GM12878 (cell line): ENCODE measurements at regions of chr3 and their contacts with region 1.

Region 1: DNA sequence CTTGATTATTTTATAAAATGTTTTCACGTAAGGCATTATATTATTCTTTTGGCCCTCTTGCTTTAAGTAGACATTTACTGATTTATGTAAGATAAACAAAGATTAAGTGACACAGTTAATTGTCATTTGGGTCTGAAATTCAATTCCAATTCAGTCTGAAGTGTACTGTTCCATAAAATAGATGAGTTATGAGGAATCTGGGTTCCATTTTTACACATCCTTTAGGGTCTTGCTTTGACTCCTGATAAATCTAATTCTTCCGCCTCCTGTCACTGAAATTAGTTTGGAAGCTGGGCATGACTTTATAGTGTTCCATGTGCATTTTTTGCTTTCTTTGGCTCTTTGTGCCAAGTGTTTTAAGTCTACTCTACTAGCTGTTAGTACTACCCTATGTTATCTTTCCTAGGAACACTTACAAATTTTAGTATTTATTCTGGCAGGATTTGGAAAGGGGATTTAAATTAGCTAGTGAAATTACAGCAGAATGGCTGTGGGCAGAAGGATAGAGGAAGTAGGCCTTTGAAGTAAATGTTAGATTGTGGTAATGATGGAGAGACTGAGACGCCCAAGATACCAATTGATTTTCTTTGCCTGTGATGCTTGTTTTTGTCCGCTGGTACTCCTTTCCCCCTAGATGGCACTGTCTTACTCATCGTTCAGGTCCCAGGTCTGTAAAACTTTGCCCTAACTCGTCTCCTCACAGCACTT is 14.3 kb downstream of the ARL8B start:
- DNase-seq: no peak
- ATAC-seq: peak; percentile 74
- H3K4me3 ChIP-seq: no peak overlapping the region
- H3K27ac ChIP-seq: peak overlapping the region; percentile 90
- H3K4me1 ChIP-seq: peaks cover 48% of the 10 kb centered on the region
- H3K27me3 ChIP-seq: no peaks in the 10 kb centered on the region
- CTCF ChIP-seq: peak; percentile 72 to 85 (median 79)
- EP300 ChIP-seq: no peak; a peak in 2 of 4 replicates
- POLR2A ChIP-seq: no peak
- RAD21 ChIP-seq: peak; percentile 83

Region 2: DNA sequence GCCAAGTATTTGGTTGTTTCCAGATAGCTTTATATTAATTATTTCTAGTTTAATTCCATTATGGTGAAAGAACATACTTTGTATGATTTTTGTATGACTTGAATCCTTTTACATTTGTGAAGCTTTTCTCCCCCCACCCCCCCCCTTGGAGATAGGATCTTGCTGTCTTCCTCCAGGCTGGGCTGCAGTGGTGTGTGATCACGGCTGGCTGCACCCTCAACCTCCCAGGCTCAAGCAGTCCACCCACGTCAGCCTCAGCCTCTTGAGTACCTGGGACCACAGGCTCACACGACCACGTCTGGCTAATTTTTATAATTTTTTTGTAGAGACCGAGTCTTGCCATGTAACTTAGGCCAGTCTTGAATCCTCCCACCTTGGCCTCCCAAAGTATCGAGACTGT is 15.2 kb after region 1 on chr3:
- CTCF ChIA-PET with region 1: interaction called, 6 read pairs
- POLR2A ChIA-PET with region 1: interaction called, 6 read pairs
- RAD21 ChIA-PET with region 1: interaction called, 5 read pairs
- SMC1A ChIA-PET with region 1: interaction called, 17 read pairs
- in situ Hi-C with region 1: no loop called
- intact Hi-C with region 1: no loop called
- DNase-seq: no peak
- ATAC-seq: peak; percentile 55
- H3K4me3 ChIP-seq: no peak overlapping the region
- H3K27ac ChIP-seq: no peak overlapping the region; the same call in 1 of the 2 replicates
- H3K4me1 ChIP-seq: peaks cover 11% of the 10 kb centered on the region
- H3K27me3 ChIP-seq: no peaks in the 10 kb centered on the region
- CTCF ChIP-seq: no peak
- EP300 ChIP-seq: no peak
- POLR2A ChIP-seq: no peak
- RAD21 ChIP-seq: no peak

Region 3: DNA sequence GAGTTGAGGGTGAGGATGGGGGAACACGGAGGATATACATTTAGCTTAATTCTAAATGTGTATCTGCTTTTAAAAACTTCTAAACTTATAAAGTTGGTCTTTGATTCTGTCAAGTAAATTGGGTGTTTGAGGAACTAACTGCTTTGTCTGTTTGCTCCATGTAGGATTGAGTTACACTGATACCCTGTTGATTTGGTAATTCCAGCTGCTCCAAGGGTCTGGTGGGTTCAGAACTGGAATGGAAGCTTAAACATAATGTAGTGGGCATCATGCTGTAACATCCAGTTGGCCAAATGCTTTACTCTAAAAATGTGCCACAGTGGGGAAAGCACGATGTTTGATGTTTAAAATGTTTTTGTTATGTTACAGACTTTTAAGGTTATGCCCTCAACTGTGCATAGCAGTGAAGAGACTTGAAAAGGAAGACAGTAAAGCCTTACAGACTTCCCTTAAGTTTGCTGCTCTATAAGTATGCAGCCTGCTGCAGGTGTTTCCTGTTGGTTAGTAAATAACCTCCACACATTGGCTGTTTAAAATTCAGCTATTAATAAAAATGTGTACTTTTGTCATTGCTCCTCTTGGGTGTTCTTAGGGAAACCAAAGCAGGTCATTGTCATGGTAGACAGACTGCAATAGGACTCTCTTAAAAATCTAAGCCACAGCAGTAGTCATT is 45.2 kb after region 1 on chr3:
- CTCF ChIA-PET with region 1: interaction called, 163 read pairs
- POLR2A ChIA-PET with region 1: interaction called, 6 read pairs
- RAD21 ChIA-PET with region 1: interaction called, 28 read pairs
- SMC1A ChIA-PET with region 1: interaction called, 284 read pairs
- in situ Hi-C with region 1: no loop called
- intact Hi-C with region 1: loop called (anchors 2 kb)
- DNase-seq: no peak
- ATAC-seq: peak; percentile 23
- H3K4me3 ChIP-seq: peak overlapping the region; percentile 34; the same call in 1 of the 2 replicates
- H3K27ac ChIP-seq: peak overlapping the region; percentile 78
- H3K4me1 ChIP-seq: peaks cover 42% of the 10 kb centered on the region
- H3K27me3 ChIP-seq: no peaks in the 10 kb centered on the region
- CTCF ChIP-seq: no peak
- EP300 ChIP-seq: no peak
- POLR2A ChIP-seq: no peak
- RAD21 ChIP-seq: 0 out of 2 replicates have a peak, but pooled peaks have one; percentile 6

Region 4: GRCh38 chr3:5194341-5195159 is 58.2 kb after region 1 on chr3:
- CTCF ChIA-PET with region 1: interaction called, 163 read pairs
- POLR2A ChIA-PET with region 1: interaction called, 67 read pairs
- RAD21 ChIA-PET with region 1: interaction called, 93 read pairs
- SMC1A ChIA-PET with region 1: interaction called, 284 read pairs
- in situ Hi-C with region 1: no loop called
- intact Hi-C with region 1: loop called (anchors 2 kb)
- DNase-seq: no peak
- ATAC-seq: peak; percentile 49
- H3K4me3 ChIP-seq: peak overlapping the region; percentile 39; the same call in 1 of the 2 replicates
- H3K27ac ChIP-seq: peak overlapping the region; percentile 94
- H3K4me1 ChIP-seq: peaks cover 57% of the 10 kb centered on the region
- H3K27me3 ChIP-seq: no peaks in the 10 kb centered on the region
- CTCF ChIP-seq: no peak
- EP300 ChIP-seq: no peak
- POLR2A ChIP-seq: peak; percentile 20; the same call in 1 of the 2 replicates
- RAD21 ChIP-seq: no peak

Region 5: GRCh38 chr3:5212628-5213573 is 76.5 kb after region 1 on chr3:
- CTCF ChIA-PET with region 1: interaction called, 3 read pairs
- POLR2A ChIA-PET with region 1: no interaction called
- RAD21 ChIA-PET with region 1: interaction called, 3 read pairs
- SMC1A ChIA-PET with region 1: interaction called, 10 read pairs
- in situ Hi-C with region 1: no loop called
- intact Hi-C with region 1: no loop called
- DNase-seq: no peak
- ATAC-seq: peak; percentile 17; the same call in 1 of the 3 replicates
- H3K4me3 ChIP-seq: no peak overlapping the region
- H3K27ac ChIP-seq: no peak overlapping the region
- H3K4me1 ChIP-seq: no peaks in the 10 kb centered on the region
- H3K27me3 ChIP-seq: no peaks in the 10 kb centered on the region
- CTCF ChIP-seq: no peak
- EP300 ChIP-seq: no peak
- POLR2A ChIP-seq: no peak
- RAD21 ChIP-seq: no peak

Region 6: GRCh38 chr3:5298453-5298852 is 162.1 kb after region 1 on chr3:
- CTCF ChIA-PET with region 1: interaction called, 11 read pairs
- POLR2A ChIA-PET with region 1: interaction called, 6 read pairs
- RAD21 ChIA-PET with region 1: interaction called, 12 read pairs
- SMC1A ChIA-PET with region 1: interaction called, 18 read pairs
- in situ Hi-C with region 1: no loop called
- intact Hi-C with region 1: loop called (anchors 2 kb)
- DNase-seq: peak; percentile 69
- ATAC-seq: peak; percentile 98
- H3K4me3 ChIP-seq: no peak overlapping the region
- H3K27ac ChIP-seq: no peak overlapping the region
- H3K4me1 ChIP-seq: peaks cover 14% of the 10 kb centered on the region
- H3K27me3 ChIP-seq: no peaks in the 10 kb centered on the region
- CTCF ChIP-seq: no peak
- EP300 ChIP-seq: peak; percentile 68 to 92; a peak in 3 of 4 replicates
- POLR2A ChIP-seq: no peak
- RAD21 ChIP-seq: no peak

Region 7: DNA sequence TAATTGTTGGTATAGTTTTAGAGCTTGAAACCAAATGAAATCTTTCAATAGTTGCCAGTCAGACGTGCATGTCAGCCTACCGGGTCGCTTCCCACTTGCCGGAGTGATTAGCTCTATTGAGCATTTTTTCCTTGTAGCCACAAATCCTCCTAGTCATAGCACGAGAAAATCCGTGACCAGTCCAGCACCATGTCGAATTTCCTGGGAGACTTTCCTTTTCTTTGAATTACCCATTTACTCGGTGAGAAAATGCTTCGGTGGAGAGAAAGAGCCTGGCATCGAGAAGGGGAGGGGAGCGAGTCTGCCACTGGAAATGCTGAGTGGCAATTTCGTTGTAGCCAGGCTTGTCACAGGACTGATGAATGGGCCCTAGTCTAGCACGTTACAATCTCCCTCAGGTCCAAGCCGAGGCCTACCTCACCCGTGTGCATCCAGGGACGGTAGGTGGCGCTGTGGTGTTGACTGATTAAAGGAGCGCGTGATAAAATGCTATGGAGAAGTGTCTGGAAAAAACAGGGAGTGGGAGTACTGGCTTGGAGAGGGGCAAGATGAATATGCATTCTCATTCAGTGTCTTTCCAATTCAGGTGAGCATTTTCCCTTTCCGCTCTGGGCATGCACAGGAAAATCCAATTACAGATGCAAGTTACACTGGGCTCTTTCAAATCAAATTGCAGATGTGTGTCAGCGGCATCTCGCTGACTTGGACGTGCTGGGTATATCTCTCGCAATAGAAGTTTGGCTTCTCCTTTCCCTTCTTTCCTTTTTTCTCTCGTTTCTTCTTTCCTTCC is 289.9 kb after region 1 on chr3:
- CTCF ChIA-PET with region 1: interaction called, 3 read pairs
- POLR2A ChIA-PET with region 1: no interaction called
- RAD21 ChIA-PET with region 1: interaction called, 3 read pairs
- SMC1A ChIA-PET with region 1: interaction called, 3 read pairs
- in situ Hi-C with region 1: loop called (anchors 10 kb)
- intact Hi-C with region 1: loop called (anchors 10 kb)
- DNase-seq: no peak
- ATAC-seq: peak; percentile 83
- H3K4me3 ChIP-seq: no peak overlapping the region
- H3K27ac ChIP-seq: no peak overlapping the region
- H3K4me1 ChIP-seq: peaks cover 17% of the 10 kb centered on the region
- H3K27me3 ChIP-seq: no peaks in the 10 kb centered on the region
- CTCF ChIP-seq: peak; percentile 83 to 98 (median 89)
- EP300 ChIP-seq: no peak
- POLR2A ChIP-seq: no peak
- RAD21 ChIP-seq: peak; percentile 90